Posterior cingulate gyrus (tissue), 11 donors: ENCODE measurements at regions of chr13 and their contacts with region 1.

Region 1: DNA sequence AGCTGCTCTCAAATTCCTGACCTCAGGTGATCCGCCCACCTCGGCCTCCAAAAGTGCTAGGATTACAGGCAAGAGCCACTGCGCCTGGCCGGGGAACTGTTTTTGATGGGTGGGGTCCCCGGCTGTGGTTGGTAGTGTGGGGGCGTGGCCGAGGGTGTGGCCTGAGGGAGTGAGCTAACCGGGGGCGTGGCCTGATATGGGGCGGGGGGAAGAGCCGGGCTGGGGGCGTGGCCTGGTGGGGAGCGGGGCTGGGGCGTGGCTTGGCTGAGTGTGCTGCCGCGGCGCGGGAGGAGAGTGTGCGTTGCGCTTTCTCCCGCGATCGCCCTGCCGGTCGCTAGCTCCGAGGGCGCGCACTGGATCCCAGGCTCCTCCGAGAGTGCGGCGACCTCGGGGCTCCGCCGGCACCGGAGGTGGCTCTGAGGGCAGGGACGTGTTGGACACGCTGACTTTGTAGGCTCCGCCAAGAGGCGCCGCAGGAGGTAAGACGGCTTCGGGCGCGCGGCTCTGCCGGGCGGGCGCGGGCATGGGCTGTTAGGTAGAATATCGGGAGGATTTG is at the start of gene SPATA13:
- DNase-seq: peak; percentile 81 to 98 (median 94)

Region 2: GRCh38 chr13:24053519-24054251 is 106.8 kb before region 1 on chr13:
- intact Hi-C with region 1: loop called (anchors 5 kb)
- DNase-seq: peak in 8 of 10 donors; percentile 62 to 93 (median 70)